Tibial artery (tissue), 4 donors: ENCODE measurements at regions of chr3 and their contacts with region 1.

Region 1: DNA sequence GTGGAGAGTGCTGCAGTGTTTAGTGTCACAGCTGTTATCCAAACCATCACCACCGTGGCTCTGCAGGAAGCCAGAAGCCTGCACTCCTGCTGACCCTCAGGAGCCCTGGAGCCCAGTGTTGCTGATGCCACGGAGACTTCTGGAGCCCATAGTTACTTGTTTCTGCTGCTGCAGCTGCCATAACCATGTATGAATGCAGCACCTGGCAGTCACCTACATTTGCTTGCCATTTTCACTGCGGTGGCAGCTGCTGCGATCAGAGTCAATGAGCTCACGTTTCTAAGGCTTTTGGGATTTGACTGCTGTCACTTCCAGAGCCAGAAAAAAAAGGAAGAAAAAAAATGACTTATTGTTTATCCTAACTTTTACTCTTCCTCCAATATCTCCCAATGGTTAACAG is 299.2 kb upstream of the THRB start:
- DNase-seq: no peak
- H3K4me3 ChIP-seq: no peak overlapping the region
- H3K27ac ChIP-seq: no peak overlapping the region
- H3K4me1 ChIP-seq: no peaks in the 10 kb centered on the region
- H3K27me3 ChIP-seq: no peaks in the 10 kb centered on the region
- CTCF ChIP-seq: no peak

Region 2: GRCh38 chr3:24730173-24730572 is 63.7 kb before region 1 on chr3:
- intact Hi-C with region 1: no loop called
- DNase-seq: no peak
- H3K4me3 ChIP-seq: no peak overlapping the region
- H3K27ac ChIP-seq: no peak overlapping the region
- H3K4me1 ChIP-seq: no peaks in the 10 kb centered on the region
- H3K27me3 ChIP-seq: no peaks in the 10 kb centered on the region
- CTCF ChIP-seq: no peak

Region 3: GRCh38 chr3:24810881-24811280 is 17.0 kb after region 1 on chr3:
- intact Hi-C with region 1: no loop called
- DNase-seq: no peak
- H3K4me3 ChIP-seq: no peak overlapping the region
- H3K27ac ChIP-seq: no peak overlapping the region
- H3K4me1 ChIP-seq: no peaks in the 10 kb centered on the region
- H3K27me3 ChIP-seq: no peaks in the 10 kb centered on the region
- CTCF ChIP-seq: no peak

Region 4: DNA sequence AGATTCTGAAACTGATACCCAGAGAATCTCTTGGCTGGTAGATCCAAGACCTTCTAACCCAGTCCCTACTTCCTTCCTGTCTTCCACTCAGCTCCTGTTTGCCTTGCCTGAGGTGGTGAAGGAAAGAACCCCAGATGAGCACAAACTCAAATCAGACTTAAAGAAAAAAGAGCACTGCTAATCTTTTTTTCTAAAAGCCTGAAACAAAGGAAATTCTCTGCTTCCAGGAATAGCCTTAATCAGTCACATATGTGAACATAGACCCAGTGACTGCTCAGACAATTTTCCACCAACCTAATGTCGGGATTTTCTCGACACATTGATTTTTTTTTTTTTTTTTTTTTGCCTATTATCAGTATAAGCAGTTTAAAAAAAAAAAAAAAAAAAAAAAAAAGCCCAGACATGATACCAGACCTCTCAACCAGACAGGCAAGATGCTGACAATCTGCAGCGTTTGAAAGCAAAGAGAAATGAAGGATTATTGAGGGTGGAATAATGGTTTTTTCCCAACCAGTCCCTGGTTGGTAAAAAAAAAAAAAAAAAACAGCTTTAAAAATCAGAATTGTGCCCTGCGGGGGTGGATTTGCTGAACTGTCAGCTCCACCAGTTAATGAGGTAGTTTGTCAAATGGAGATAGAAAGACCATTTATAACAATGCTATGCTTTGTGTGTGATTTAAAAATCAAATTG is 377.4 kb after region 1 on chr3:
- intact Hi-C with region 1: loop called (anchors 10 kb)
- DNase-seq: no peak
- H3K4me3 ChIP-seq: no peak overlapping the region
- H3K27ac ChIP-seq: no peak overlapping the region
- H3K4me1 ChIP-seq: no peaks in the 10 kb centered on the region
- H3K27me3 ChIP-seq: no peaks in the 10 kb centered on the region
- CTCF ChIP-seq: no peak